Heart left ventricle (tissue), 16 donors: ENCODE measurements at regions of chr1 and their contacts with region 1.

Region 1: GRCh38 chr1:212455803-212456528 is 23.2 kb downstream of the NENF start:
- DNase-seq: peak; percentile 86 to 91 (median 87)
- ATAC-seq: peak; percentile 75 to 82 (median 78)
- H3K4me3 ChIP-seq: peak overlapping the region in 3 of 12 donors; percentile 8 to 36 (median 13)
- H3K27ac ChIP-seq: peak overlapping the region in 10 of 12 donors; percentile 6 to 73 (median 45)
- H3K4me1 ChIP-seq: peaks cover 0 to 42% (median 21%) of the 10 kb centered on the region in 12 donors
- H3K27me3 ChIP-seq: no peaks in the 10 kb centered on the region
- CTCF ChIP-seq: peak; percentile 95 to 100 (median 98)
- POLR2A ChIP-seq: no peak

Region 2: DNA sequence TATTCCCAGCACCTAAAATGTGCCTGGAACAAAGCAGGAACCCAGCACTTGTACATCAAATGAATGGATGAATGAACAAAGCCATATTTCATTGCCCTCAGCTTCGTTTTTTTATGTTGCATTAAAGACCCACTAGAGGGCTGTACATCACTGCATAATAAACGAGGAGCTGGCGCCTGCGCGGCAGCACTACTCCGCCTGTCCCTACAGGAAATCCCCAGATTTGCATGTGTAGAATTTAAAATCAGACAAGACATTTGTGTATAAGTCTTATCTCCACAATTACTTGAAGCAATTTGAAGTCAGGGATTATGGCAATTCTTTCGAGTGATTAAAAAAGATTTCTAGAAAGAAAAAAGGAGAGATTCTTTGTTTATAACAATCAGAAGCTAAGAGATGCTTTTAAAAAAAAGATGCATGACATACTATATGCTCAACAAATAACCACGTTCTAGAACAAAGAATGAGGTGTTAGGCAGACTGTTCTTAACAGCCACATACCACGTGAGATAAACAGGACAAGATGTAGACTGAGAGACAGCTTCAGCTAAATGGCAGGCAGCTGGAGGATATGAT is 775.1 kb before region 1 on chr1:
- intact Hi-C with region 1: loop called in 7 of 10 experiments (anchors 10 kb)
- DNase-seq: peak; percentile 43 to 74 (median 60)
- ATAC-seq: peak; percentile 68 to 92 (median 87)
- H3K4me3 ChIP-seq: no peak overlapping the region
- H3K27ac ChIP-seq: peak overlapping the region in 1 of 12 donors; percentile 54
- H3K4me1 ChIP-seq: peaks cover 0 to 10% (median under 1%) of the 10 kb centered on the region in 12 donors
- H3K27me3 ChIP-seq: peaks cover 0 to under 1% (median 0%) of the 10 kb centered on the region in 9 donors
- CTCF ChIP-seq: peak; percentile 56 to 80 (median 69)
- POLR2A ChIP-seq: no peak

Region 3: GRCh38 chr1:212035123-212035834 is 420.7 kb before region 1 on chr1 and contains the starts of genes DTL and INTS7:
- intact Hi-C with region 1: loop called in 3 of 10 experiments (anchors 1 to 10 kb)
- DNase-seq: peak; percentile 99 to 100 (median 99)
- ATAC-seq: peak; percentile 98 to 99 (median 98)
- H3K4me3 ChIP-seq: peak within 1 kb of the TSS; percentile 35 to 79 (median 62)
- H3K27ac ChIP-seq: peak within 1 kb of the TSS; percentile 72 to 93 (median 88)
- H3K4me1 ChIP-seq: peaks cover 0 to 49% (median 22%) of the 10 kb centered on the region in 12 donors
- H3K27me3 ChIP-seq: no peaks in the 10 kb centered on the region
- CTCF ChIP-seq: peak; percentile 87 to 99 (median 94)
- POLR2A ChIP-seq: peak in 1 of 2 donors; percentile 48
- total RNA-seq, gene DTL: 0.20 to 6.2 (median 0.47) TPM in 8 of 9 donors, not detected in the other
- total RNA-seq, gene INTS7: 5.8 to 12.9 (median 9.5) TPM

Region 4: DNA sequence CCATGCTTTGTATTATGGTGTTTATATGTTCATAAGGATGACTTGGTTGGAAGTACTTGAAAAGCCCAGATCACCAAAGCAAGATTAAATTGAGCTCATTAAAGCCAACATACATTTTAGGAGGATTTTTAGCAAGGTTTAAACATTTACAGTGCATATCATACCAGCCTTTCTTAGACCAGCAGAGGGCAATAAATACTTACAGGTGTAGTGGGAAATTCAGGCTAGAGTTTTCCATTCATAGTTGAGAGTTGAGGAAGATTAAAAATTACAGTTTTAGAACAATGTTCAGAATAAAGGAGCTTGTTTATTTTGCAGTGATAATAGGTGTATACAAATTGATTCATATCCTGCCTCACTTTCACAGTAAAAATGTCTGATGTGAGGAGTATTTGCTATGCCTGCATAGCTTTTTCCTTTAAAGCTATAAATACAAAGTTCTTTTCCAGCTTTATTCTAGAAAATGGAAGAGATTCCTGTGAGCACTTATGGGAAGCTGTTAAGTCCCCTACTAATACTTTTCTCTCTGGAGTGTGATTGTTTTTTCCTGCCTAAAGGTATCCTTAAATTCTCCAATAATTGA is 385.2 kb before region 1 on chr1:
- intact Hi-C with region 1: loop called in 5 of 10 experiments (anchors 1 to 5 kb)
- DNase-seq: no peak
- ATAC-seq: peak in 3 of 4 donors; percentile 48 to 61 (median 57)
- H3K4me3 ChIP-seq: no peak overlapping the region
- H3K27ac ChIP-seq: peak overlapping the region in 2 of 12 donors; percentile 2 to 33
- H3K4me1 ChIP-seq: peaks cover 0 to 12% (median 0%) of the 10 kb centered on the region in 12 donors
- H3K27me3 ChIP-seq: no peaks in the 10 kb centered on the region
- CTCF ChIP-seq: peak; percentile 69 to 89 (median 80)
- POLR2A ChIP-seq: no peak

Region 5: DNA sequence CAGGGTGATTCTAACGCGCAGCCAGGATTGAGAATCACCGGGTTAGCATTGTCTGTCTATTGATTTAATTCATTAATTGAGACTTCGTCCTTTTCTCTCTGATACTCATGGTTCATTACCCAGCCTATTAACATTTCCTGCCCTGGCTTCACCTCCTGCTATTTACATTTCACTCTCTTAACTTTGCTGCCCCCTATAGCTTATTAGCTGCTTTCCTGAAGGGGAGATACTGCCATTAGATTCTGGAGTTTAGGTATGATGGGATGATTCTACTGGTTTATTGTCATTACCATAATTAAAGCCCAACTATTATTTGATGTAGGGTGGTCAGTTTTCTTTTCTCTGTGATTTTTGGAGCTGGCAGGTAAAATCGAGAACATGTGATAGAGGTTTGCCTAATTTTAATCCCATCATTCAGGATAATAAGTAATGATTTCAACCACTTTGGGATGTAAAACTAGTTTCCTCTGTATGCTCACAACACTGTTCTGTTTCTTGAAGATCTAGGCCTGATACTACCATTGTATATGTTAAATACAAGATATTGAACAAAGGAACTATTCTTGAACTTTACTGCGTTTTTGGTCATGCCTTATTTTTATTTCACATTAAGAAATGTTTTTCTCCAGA is 164.3 kb before region 1 on chr1:
- intact Hi-C with region 1: loop called in 8 of 10 experiments (anchors 5 to 10 kb)
- DNase-seq: no peak
- ATAC-seq: peak; percentile 56 to 81 (median 66)
- H3K4me3 ChIP-seq: peak overlapping the region in 1 of 12 donors; percentile 95
- H3K27ac ChIP-seq: peak overlapping the region in 1 of 12 donors; percentile 21
- H3K4me1 ChIP-seq: peaks cover 10 to 93% (median 72%) of the 10 kb centered on the region in 12 donors
- H3K27me3 ChIP-seq: no peaks in the 10 kb centered on the region
- CTCF ChIP-seq: peak; percentile 34 to 73 (median 60)
- POLR2A ChIP-seq: no peak

Region 6: DNA sequence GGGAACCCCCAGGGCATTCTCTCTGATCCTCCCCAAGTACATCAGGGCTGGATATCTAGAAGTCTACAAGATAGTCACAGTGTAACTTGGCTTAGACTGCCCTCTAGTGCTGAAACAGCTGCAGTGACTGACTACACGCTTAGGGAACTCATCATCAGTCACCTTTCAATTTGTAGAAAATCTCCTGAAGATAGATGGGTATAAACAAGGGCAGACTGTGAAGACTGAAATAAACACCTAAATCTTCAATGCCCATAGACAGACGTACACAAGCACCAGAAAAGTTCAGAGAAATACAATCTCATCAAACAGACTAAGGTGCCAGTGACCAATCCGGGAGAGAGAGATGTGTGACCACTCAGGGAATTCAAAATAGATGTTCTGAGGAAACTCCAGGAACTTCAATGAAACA is 87.9 kb before region 1 on chr1:
- intact Hi-C with region 1: loop called in 7 of 10 experiments (anchors 1 to 10 kb)
- DNase-seq: peak in 3 of 5 donors; percentile 33 to 51 (median 35)
- ATAC-seq: peak; percentile 45 to 88 (median 84)
- H3K4me3 ChIP-seq: no peak overlapping the region
- H3K27ac ChIP-seq: peak overlapping the region in 1 of 12 donors; percentile 2
- H3K4me1 ChIP-seq: peaks cover 0 to 23% (median 1%) of the 10 kb centered on the region in 12 donors
- H3K27me3 ChIP-seq: no peaks in the 10 kb centered on the region
- CTCF ChIP-seq: peak; percentile 76 to 91 (median 83)
- POLR2A ChIP-seq: no peak

Region 7: DNA sequence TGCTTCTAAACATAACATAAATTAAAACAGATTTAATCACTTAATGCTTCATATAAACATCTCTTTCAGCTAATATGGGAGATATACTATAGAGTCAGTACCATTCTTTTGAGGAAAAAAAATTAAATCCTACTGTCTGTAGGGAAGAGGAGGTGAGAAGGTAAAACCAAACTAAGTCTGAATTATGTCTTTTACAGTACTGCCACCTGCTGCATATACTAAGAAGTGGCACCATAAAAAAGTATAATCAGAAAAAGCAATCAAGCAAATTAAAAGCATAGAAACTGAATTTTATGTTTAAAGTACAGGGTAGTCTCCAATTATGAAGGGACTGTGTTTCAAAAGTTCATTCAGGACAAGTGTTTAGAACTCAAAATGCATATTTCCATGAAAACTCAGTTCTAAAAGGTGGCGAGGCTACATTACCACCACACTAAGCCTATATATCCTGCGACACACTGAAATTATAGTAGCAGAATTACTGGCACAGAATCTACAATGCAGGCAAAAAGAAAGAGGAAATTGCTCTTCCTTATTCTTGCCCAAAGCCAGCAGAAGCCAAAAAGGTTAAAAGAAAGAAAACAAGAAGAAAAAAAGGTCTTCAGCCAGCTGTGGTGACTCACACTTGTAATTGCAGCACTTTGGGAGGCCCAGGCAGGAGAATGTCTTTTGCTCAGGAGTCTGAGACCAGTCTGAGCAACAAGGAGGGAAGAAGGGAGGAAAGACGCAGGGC is 326.6 kb after region 1 on chr1:
- intact Hi-C with region 1: loop called in 1 of 10 experiments (anchors 5 kb)
- DNase-seq: peak in 1 of 5 donors; percentile 40
- ATAC-seq: peak in 2 of 4 donors; percentile 38 to 54
- H3K4me3 ChIP-seq: no peak overlapping the region
- H3K27ac ChIP-seq: peak overlapping the region in 1 of 12 donors; percentile 71
- H3K4me1 ChIP-seq: peaks cover 0 to 28% (median 0%) of the 10 kb centered on the region in 12 donors
- H3K27me3 ChIP-seq: no peaks in the 10 kb centered on the region
- CTCF ChIP-seq: peak; percentile 47 to 70 (median 58)
- POLR2A ChIP-seq: no peak